Activated naive CD4-positive, alpha-beta T cell treated with anti-CD3 and anti-CD28 coated beads for 36 hours (primary cell): ENCODE measurements at regions of chrX and their contacts with region 1.

Region 1: DNA sequence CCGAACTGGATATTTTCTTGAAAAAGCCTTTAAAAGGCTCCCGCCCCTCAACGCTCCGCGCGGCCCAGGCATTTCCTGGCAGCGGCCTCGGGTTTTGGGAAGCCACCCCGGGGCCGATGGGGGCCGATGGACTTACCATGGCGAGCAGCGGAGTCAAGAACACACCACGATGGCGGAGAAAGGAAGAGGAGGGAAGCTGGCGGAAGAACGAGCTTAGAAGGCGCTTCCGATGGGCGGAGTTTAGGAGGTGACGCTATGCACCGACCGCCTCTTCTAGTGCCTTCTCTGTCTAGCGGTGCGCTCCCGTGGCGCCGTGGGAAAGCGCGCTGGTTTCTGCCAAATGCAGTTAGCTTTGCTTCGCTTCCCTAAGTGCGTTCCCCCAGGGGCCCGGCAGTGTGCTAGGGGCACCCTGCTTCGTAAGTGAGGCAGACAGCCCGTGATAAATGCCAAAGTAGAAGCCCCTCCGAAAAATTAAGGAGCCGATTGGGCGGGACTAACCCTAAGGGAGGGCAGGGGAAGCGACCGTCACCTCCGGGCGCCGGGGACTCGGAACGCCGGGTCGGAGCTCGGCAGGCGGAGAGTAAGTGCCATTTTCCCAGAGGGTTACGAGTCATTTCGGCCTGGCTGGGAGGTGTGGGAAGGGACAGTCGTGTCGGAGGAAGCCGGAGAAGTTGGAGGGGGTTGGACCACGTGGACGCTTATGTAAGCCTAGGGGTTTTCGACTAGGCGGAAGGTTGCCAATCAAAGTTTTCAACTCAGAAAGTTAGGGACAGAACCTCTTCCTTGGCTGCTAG is at the start of gene RPL39:
- DNase-seq: peak; percentile 82
- H3K4me3 Mint-ChIP-seq: peak within 1 kb of the TSS; percentile 86
- H3K27ac Mint-ChIP-seq: peak within 1 kb of the TSS; percentile 95
- H3K4me1 Mint-ChIP-seq: peaks cover 29% of the 10 kb centered on the region
- H3K27me3 Mint-ChIP-seq: no peaks in the 10 kb centered on the region
- total RNA-seq, gene RPL39: 3,049 to 3,109 TPM

Region 2: DNA sequence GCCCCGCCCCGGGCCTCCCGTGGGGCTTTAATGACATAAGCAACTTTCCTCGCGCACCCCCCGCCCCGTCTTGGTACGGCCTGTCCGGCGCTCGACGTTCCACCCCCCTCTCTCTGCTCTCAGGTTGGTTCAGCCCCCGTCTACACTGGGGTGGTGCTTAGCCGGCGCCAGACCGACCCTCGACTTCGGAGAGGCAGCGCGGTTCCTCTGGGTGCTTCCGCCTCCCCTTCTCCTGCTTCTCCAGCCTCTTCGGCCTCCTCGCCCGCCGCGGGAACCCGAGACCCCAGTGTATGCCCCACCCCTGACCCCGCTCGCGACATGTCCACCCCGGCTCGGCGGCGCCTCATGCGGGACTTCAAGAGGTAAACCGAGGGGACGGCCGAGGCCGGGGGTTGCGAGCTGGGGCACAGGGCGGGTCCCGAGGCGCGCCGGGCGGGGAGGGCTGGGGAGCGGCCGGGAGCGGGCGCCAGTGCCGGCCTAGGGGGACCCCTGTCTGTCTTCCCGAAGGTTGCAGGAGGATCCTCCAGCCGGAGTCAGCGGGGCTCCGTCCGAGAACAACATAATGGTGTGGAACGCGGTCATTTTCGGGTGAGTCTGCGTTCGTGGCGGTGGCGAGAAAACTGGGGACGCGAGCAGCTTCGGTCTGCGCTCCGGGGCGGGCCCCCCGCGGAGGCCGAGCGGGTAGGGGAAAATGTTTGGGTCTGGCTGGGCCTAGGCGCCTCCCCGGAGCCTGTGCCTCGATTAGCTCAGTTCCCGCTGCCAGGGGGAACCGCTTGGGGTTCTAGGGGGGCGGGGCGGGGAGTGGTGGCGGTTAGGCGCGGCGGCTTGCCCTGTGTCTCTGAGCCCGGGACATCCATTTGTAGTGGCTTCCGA is 217.0 kb before region 1 on chrX and contains the start of gene UBE2A:
- CTCF ChIA-PET with region 1: no interaction called
- intact Hi-C with region 1: loop called (anchors 5 kb)
- DNase-seq: peak; percentile 89
- H3K4me3 Mint-ChIP-seq: peak within 1 kb of the TSS; percentile 91
- H3K27ac Mint-ChIP-seq: peak within 1 kb of the TSS; percentile 89
- H3K4me1 Mint-ChIP-seq: peaks cover 12% of the 10 kb centered on the region
- H3K27me3 Mint-ChIP-seq: no peaks in the 10 kb centered on the region
- total RNA-seq, gene UBE2A: 46.1 to 49.8 TPM

Region 3: DNA sequence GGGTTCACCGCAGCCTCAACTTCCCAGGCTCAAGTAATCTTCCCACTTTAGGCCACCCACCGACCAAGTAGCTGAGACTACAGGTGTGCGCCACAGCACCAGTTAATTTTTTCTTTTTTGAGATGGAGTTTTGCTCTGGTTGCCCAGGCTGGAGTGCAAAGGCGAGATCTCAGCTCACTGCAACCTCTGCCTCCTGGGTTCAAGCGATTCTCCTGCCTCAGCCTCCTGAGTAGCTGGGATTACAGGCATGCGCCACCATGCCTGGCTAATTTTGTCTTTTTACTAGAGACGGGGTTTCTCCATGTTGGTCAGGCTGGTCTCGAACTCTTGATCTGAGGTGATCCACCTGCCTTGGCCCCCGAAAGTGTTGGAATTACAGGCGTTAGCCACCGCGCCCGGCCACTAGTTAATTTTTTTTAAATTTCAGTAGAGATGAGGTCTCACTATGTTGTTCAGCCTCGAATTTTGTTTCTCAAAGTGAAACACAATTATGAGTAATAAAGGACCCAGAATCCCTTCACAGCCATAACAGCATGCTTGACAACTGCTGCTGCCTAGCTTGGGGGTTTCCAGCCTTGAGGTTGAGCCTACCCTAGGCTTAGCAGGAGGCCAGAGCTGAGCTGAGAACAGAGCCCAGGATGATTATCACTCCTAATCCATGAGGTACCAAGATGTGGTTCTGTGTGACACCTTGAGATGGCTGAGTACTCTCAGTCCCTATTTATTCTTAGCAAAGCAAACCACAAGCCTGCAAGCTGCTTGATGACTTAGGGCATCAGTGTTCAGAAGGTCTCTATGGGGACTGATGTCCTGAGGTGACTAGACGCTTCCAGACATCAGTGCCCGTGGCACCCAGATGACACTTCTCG is 143.8 kb before region 1 on chrX:
- CTCF ChIA-PET with region 1: no interaction called
- intact Hi-C with region 1: loop called (anchors 1 kb)
- DNase-seq: peak; percentile 84
- H3K4me3 Mint-ChIP-seq: no peak overlapping the region
- H3K27ac Mint-ChIP-seq: peak overlapping the region; percentile 89
- H3K4me1 Mint-ChIP-seq: peaks cover 32% of the 10 kb centered on the region
- H3K27me3 Mint-ChIP-seq: no peaks in the 10 kb centered on the region

Region 4: DNA sequence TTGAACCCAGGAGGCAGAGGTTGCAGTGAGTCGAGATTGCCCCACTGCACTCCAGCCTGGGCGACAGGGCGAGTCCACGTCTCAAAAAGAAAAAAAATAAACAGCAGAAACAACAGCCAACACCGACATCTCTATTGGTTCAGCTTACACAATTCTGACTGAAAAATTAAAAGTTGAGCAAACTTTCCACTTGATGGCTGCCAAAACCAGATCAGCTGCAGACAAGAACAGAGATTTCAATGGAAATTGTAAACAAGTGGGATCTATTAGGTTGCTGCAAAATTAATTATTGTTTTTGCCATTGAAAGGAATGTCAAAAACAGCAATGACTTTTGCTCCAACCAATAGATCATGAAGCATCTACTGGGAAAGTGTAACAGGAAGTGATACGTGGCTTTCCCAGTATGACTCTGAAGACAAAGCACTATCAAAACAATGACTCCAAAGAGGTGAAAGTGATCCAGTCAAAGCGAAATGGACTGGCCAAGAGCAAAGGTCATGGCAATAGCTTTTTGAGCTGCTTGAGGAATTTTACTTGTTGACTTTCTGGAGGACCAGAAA is 34.8 kb after region 1 on chrX:
- CTCF ChIA-PET with region 1: no interaction called
- intact Hi-C with region 1: loop called (anchors 1 kb)
- DNase-seq: peak; percentile 38
- H3K4me3 Mint-ChIP-seq: no peak overlapping the region
- H3K27ac Mint-ChIP-seq: peak overlapping the region; percentile 30
- H3K4me1 Mint-ChIP-seq: peaks cover 18% of the 10 kb centered on the region
- H3K27me3 Mint-ChIP-seq: no peaks in the 10 kb centered on the region

Region 5: GRCh38 chrX:119871599-119872395 is 80.2 kb after region 1 on chrX and contains the starts of genes NDUFA1 and RNF113A:
- CTCF ChIA-PET with region 1: interaction called, 3 read pairs
- intact Hi-C with region 1: loop called (anchors 1 kb)
- DNase-seq: peak; percentile 86
- H3K4me3 Mint-ChIP-seq: peak within 1 kb of the TSS; percentile 97
- H3K27ac Mint-ChIP-seq: peak within 1 kb of the TSS; percentile 98
- H3K4me1 Mint-ChIP-seq: peaks cover 13% of the 10 kb centered on the region
- H3K27me3 Mint-ChIP-seq: no peaks in the 10 kb centered on the region
- total RNA-seq, gene NDUFA1: 105 to 107 TPM
- total RNA-seq, gene RNF113A: 20.8 to 22.0 TPM

Region 6: GRCh38 chrX:119943185-119943988 is 151.8 kb after region 1 on chrX and contains the start of gene NKAP:
- CTCF ChIA-PET with region 1: interaction called, 3 read pairs
- intact Hi-C with region 1: loop called (anchors 1 kb)
- DNase-seq: peak; percentile 86
- H3K4me3 Mint-ChIP-seq: peak within 1 kb of the TSS; percentile 98
- H3K27ac Mint-ChIP-seq: peak within 1 kb of the TSS; percentile 95
- H3K4me1 Mint-ChIP-seq: peaks cover 23% of the 10 kb centered on the region
- H3K27me3 Mint-ChIP-seq: no peaks in the 10 kb centered on the region
- total RNA-seq, gene NKAP: 12.3 to 12.7 TPM